A549 (cell line): ENCODE measurements at regions of chr15 and their contacts with region 1.

Region 1: GRCh38 chr15:78709263-78709882 is 68.4 kb upstream of the CHRNB4 start:
- DNase-seq: peak; percentile 67 to 86
- ATAC-seq: peak; percentile 98 to 99
- H3K4me3 ChIP-seq: peak overlapping the region; percentile 30
- H3K27ac ChIP-seq: peak overlapping the region; percentile 46 to 54; a peak in 4 of 6 replicates
- H3K4me1 ChIP-seq: peaks cover 4% of the 10 kb centered on the region; the same call in 1 of the 3 replicates
- CTCF ChIP-seq: peak; percentile 97
- EP300 ChIP-seq: no peak
- POLR2A ChIP-seq: no peak
- RAD21 ChIP-seq: peak; percentile 96 to 98

Region 2: DNA sequence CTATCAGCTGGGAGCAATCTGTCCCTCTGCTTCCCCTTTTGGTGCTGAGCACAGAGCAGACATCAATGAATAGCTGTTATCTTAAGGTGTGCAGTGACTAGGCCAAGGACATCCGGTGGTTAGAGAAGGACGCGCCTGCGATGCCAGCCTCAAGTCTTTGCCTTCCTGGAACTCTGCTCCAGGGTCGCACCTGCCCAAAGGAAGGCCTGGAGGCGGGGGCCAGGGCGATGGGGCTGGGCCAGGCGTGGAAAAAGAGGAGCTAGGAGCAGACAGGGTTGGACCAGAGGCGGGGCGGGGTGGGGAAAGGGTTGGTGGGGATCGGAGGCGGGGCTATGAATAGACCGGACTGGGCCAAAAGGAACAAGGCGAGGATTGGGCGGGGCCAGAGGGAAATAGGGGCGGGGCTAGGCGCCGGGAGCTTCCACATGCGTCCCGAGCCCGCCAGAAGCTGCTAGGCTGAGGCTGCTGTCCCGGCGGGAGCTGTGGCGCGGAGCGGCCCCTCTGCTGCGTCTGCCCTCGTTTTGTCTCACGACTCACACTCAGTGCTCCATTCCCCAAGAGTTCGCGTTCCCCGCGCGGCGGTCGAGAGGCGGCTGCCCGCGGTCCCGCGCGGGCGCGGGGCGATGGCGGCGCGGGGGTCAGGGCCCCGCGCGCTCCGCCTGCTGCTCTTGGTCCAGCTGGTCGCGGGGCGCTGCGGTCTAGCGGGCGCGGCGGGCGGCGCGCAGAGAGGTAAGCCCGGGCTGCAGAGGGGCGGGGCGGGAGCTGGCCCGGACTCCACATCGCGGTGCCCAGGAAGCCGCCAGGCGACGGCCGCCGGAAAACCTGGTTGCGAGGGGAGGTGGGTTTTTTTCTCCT is 144.0 kb before region 1 on chr15 and contains the start of gene CHRNA5:
- CTCF ChIA-PET with region 1: interaction called, 13 read pairs
- POLR2A ChIA-PET with region 1: interaction called, 4 read pairs
- DNase-seq: peak; percentile 92 to 94
- ATAC-seq: peak; percentile 91 to 96
- H3K4me3 ChIP-seq: peak within 1 kb of the TSS; percentile 73
- H3K27ac ChIP-seq: peak within 1 kb of the TSS; percentile 85 to 94
- H3K4me1 ChIP-seq: peaks cover 10% of the 10 kb centered on the region
- CTCF ChIP-seq: peak; percentile 18; the same call in 2 of the 3 replicates
- EP300 ChIP-seq: no peak
- POLR2A ChIP-seq: peak; percentile 99
- RAD21 ChIP-seq: no peak; a peak in 1 of 5 replicates
- polyA plus RNA-seq, gene CHRNA5: 40.9 and 49.6 TPM in 2 replicates

Region 3: DNA sequence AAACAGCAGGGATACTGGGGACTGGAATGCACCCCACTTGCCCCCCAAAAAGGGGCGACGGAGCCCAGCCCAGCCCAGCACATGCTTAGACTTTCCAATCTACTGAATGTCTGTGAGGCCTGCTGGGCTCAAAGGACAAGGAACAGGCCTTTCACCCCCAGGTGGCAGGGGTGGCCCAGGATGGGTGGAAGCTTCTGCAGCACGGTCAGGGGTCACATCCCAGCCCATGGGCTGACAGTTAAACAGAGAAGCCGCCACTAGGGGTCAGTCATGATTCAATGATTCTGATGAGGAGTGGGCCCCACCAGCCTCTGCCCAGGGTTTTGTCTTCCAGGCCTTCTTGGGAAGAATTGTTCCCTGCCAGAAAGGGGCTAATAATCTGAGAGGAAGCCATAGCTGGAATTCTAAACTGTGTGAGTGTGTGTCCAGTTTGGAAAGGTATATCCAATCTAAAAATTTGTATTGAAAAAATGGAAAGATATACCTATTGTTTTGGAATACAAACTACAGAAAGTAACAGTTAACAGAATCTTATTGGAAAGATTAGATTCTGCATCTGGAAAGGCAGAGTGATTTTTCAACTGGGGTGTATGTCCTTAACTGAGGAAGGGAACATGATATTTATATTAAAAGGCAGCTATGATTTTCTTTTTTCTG is 70.6 kb before region 1 on chr15:
- CTCF ChIA-PET with region 1: interaction called, 180 read pairs
- POLR2A ChIA-PET with region 1: no interaction called
- DNase-seq: peak; percentile 70 to 93
- ATAC-seq: peak; percentile 64 to 89
- H3K4me3 ChIP-seq: no peak overlapping the region
- H3K27ac ChIP-seq: no peak overlapping the region
- H3K4me1 ChIP-seq: 0 out of 3 replicates have a peak, but pooled peaks cover 3% of the 10 kb centered on the region
- CTCF ChIP-seq: peak; percentile 92
- EP300 ChIP-seq: no peak
- POLR2A ChIP-seq: no peak
- RAD21 ChIP-seq: peak; percentile 87 to 88

Region 4: GRCh38 chr15:78663703-78664102 is 45.7 kb before region 1 on chr15:
- CTCF ChIA-PET with region 1: interaction called, 16 read pairs
- POLR2A ChIA-PET with region 1: no interaction called
- DNase-seq: no peak
- ATAC-seq: no peak
- H3K4me3 ChIP-seq: no peak overlapping the region
- H3K27ac ChIP-seq: no peak overlapping the region
- H3K4me1 ChIP-seq: no peaks in the 10 kb centered on the region
- CTCF ChIP-seq: no peak
- EP300 ChIP-seq: no peak
- POLR2A ChIP-seq: no peak
- RAD21 ChIP-seq: no peak

Region 5: DNA sequence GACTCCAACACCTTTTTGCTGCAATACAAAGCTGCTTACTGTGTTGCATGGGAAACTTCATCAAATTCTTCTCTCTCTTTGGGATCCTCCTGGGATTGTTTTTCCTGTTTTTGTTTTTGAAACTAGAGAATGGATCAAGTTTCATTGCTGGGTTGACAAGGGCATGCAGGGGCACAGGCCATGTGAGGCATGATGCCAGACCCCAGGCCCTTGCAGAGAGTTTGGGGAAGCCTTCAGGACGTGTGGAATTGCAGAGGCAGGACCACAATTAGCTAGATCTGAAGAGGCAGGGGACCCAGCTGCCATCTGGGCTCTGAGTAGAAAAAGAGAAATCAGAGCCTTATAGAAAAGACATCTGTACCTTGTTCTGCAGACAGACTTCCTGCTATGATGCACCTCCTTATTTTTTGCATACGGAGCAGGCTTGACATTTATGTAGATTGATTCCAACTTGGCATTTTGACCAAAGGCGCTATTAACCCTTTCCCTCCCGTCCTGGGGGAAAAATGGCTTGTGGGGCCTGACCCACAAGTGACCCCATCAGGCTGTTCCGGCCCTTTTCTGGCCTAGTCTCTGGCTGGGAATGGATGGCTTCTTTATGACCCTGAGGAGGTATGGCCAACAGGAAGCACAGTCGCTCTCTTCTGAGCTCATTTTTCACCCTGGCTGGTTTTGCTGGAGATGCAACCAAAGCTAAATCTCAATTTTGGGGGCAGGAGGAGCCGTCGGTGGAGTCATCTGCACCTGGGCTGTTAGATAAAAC is 24.0 kb before region 1 on chr15:
- CTCF ChIA-PET with region 1: interaction called, 87 read pairs
- POLR2A ChIA-PET with region 1: no interaction called
- DNase-seq: no peak
- ATAC-seq: peak in 1 of 2 experiments; percentile 23; a peak in 1 of 6 replicates
- H3K4me3 ChIP-seq: no peak overlapping the region
- H3K27ac ChIP-seq: no peak overlapping the region
- H3K4me1 ChIP-seq: no peaks in the 10 kb centered on the region
- CTCF ChIP-seq: no peak
- EP300 ChIP-seq: no peak
- POLR2A ChIP-seq: no peak
- RAD21 ChIP-seq: no peak

Region 6: DNA sequence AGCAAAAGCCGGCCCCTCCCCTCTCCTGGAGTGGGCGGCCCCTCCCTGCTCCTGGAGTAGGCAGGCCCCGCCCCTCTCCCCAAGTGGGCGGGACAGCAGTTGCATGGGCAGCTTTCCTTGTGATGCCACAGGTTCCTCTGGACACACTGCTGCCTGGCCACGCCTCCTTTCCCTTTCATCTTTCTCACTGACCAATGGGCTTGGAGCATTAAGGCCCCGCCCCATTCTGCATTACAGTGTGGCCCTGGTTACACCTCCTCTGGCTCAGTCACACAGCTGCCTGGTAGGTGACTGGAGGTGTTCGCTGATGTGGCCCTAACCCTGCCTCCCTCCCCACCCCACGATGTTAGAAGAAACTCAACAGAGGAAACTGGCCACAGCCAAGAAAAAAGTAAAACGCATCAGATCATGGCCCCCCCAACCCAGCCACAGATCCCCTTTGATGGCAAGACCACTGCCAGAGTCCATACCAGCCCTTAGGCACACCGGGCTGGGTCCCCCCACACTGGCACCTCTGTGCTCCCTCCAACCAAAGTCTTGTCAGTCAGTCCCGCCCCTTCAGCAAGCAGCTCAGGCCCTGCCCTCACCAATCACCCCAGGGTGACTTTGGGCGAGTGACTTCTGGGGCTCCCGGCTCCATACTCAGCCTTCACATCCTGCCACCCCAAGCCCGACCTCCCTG is 17.6 kb after region 1 on chr15:
- CTCF ChIA-PET with region 1: interaction called, 28 read pairs
- POLR2A ChIA-PET with region 1: no interaction called
- DNase-seq: peak; percentile 44 to 81
- ATAC-seq: peak; percentile 59 to 77
- H3K4me3 ChIP-seq: no peak overlapping the region
- H3K27ac ChIP-seq: peak overlapping the region; percentile 51 to 68; a peak in 5 of 6 replicates
- H3K4me1 ChIP-seq: peaks cover 26% of the 10 kb centered on the region
- CTCF ChIP-seq: no peak
- EP300 ChIP-seq: no peak
- POLR2A ChIP-seq: no peak
- RAD21 ChIP-seq: no peak

Region 7: DNA sequence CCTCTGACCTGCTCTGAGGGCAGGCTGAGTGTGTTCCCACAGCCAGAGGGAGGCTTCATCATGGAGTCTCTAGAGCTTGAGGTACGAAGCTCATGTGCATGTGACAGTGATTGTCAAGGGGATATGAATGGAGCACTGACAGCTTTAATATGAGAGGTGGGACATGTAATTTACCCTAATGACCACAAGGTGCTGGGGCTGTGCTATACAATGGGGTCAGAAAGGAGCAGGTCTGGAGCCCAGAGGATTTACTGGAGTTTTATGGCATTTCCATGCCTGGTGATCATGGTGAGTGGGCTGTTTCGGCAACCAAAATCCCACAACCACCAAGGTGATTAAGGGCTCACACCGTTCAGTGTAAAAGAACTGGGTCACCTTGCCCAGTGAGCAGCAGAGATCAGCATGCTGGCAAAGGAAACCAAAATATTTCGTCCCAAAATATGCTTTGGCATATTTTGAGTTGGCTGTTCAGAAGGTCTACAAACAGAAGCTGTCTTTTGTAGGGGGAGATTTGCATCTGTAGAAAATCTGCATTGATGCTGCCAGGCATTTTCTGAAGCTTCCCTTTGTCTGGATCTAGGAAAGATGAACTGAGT is 421.3 kb after region 1 on chr15:
- CTCF ChIA-PET with region 1: no interaction called
- POLR2A ChIA-PET with region 1: no interaction called
- DNase-seq: peak in 1 of 2 experiments; percentile 30
- ATAC-seq: peak in 1 of 2 experiments; percentile 80; a peak in 3 of 6 replicates
- H3K4me3 ChIP-seq: no peak overlapping the region
- H3K27ac ChIP-seq: no peak overlapping the region
- H3K4me1 ChIP-seq: no peaks in the 10 kb centered on the region
- CTCF ChIP-seq: no peak
- EP300 ChIP-seq: no peak
- POLR2A ChIP-seq: no peak
- RAD21 ChIP-seq: peak in 1 of 2 experiments; percentile 18; a peak in 1 of 5 replicates